Calu3 (cell line): ENCODE measurements at regions of chr11 and their contacts with region 1.

Region 1: DNA sequence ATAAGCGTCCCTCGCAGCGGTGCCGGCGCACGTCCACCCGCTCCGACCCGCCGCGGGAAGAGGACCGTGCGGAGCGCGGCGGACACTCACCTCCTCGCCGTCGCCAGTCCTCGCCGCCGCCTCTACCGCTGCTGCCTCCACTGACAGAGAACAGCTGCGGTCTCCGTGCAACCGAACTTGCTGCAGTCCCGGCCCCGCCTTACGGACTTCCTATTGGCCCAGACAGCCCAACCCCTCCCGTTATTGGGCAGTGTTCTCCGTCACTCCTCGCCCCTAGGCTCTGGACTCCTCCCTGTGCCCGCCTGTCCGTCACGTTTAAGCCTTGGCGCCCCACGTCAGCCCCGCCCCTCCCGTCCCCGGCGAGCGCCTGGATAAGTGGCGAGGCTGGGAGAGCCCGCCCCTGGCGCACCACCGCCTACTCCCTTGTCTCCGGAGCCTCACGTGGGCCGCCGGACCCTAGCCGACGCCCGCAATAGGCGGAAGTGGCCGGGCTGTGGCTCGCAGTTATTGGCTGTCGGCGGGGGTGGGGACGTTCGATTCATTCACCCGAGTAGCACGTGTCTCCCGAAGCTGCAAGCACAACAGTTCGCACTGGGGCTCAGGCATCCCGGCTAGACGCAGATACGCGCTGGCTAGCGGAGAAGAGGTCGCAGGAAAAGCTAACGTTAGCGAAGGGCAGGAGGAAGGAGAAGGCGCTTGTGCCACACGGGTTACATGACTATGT is at the start of gene PC:
- DNase-seq: peak; percentile 99
- H3K4me3 Mint-ChIP-seq: peak within 1 kb of the TSS; percentile 68
- H3K27ac Mint-ChIP-seq: peak within 1 kb of the TSS; percentile 82
- H3K4me1 Mint-ChIP-seq: peaks cover 38% of the 10 kb centered on the region
- H3K27me3 Mint-ChIP-seq: no peaks in the 10 kb centered on the region
- CTCF ChIP-seq: no peak
- total RNA-seq, gene PC: 40.0 and 40.5 TPM in 2 replicates

Region 2: DNA sequence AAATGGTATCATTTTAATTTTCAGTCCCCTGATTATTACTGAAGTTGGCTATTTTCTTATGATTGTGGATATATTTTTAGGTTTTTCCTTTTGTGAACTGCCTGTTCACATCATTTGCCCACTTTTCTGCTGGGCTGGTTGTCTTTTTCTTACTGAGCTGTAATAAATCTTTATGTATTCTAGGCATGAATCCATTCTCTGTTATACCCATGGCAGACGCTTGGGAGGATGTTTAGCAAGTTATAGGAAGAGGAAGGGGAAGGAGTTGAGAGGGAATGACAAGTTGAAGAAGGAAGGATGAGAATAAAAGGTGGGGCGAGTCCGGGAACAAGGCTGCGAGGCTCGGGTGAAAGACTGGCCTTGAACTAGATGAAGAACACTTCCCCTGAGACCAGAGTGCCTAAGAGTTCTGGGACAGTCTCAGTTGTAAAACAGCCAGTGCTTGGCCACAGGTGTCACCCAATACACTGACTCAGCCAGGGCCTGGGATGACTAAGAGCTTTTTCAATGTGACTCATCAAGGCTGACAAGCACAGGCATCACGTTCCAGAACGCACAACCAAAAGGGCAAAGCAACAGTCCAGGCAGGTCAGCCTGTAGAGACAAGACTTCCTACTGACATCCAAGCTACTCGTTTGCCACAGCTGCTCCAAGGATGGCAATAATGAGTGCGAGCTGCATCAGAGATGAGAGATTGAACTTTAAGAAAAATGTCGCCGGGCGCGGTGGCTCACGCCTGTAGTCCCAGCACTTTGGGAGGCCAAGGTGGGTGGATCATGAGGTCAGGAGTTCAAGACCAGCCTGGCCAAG is 66.3 kb before region 1 on chr11:
- CTCF ChIA-PET with region 1: no interaction called
- intact Hi-C with region 1: loop called (anchors 10 kb)
- DNase-seq: peak; percentile 80
- H3K4me3 Mint-ChIP-seq: no peak overlapping the region
- H3K27ac Mint-ChIP-seq: peak overlapping the region; percentile 83
- H3K4me1 Mint-ChIP-seq: peaks cover 18% of the 10 kb centered on the region
- H3K27me3 Mint-ChIP-seq: no peaks in the 10 kb centered on the region
- CTCF ChIP-seq: no peak